ENCODE measurements at regions of chr3 and their contacts with region 1.

Region 1: GRCh38 chr3:166837535-166837934 is 542.6 kb downstream of the ZBBX start:
- DNase-seq: peak; percentile 20
- ATAC-seq: peak; percentile 94
- H3K4me3 Mint-ChIP-seq: no peak overlapping the region
- H3K27ac Mint-ChIP-seq: no peak overlapping the region
- H3K4me1 Mint-ChIP-seq: peaks cover 3% of the 10 kb centered on the region
- H3K27me3 Mint-ChIP-seq: no peaks in the 10 kb centered on the region
- CTCF ChIP-seq: peak; percentile 59

Region 2: DNA sequence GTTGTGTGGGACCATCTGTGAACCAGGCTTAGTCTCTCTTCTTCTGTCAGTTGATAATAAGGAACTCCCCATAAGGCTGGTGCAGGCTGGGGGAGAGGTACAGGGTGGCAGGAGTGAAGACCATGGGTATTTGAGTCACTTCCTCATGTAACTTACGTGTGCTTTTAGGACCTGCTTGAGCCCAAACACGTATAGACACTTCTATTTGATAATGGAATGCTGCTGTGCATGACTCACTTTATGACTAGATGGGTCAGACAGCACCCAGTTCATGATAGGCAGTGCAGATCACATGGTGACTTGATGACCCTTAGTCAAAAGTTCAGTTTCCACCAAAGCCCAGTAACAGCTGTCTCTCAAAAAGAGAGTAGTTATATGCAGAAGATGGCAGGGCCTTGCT is 51.7 kb after region 1 on chr3:
- CTCF ChIA-PET with region 1: no interaction called
- POLR2A ChIA-PET with region 1: no interaction called
- DNase-seq: no peak
- ATAC-seq: no peak
- H3K4me3 Mint-ChIP-seq: no peak overlapping the region
- H3K27ac Mint-ChIP-seq: no peak overlapping the region
- H3K4me1 Mint-ChIP-seq: no peaks in the 10 kb centered on the region
- H3K27me3 Mint-ChIP-seq: no peaks in the 10 kb centered on the region
- CTCF ChIP-seq: no peak

Region 3: GRCh38 chr3:167032261-167032876 is 194.8 kb after region 1 on chr3:
- CTCF ChIA-PET with region 1: interaction called, 10 read pairs
- POLR2A ChIA-PET with region 1: no interaction called
- DNase-seq: no peak
- ATAC-seq: peak; percentile 24; the same call in 1 of the 2 replicates
- H3K4me3 Mint-ChIP-seq: no peak overlapping the region
- H3K27ac Mint-ChIP-seq: no peak overlapping the region
- H3K4me1 Mint-ChIP-seq: 0 out of 2 replicates have a peak, but pooled peaks cover 4% of the 10 kb centered on the region
- H3K27me3 Mint-ChIP-seq: no peaks in the 10 kb centered on the region
- CTCF ChIP-seq: peak; percentile 34; the same call in 1 of the 2 replicates

Region 4: DNA sequence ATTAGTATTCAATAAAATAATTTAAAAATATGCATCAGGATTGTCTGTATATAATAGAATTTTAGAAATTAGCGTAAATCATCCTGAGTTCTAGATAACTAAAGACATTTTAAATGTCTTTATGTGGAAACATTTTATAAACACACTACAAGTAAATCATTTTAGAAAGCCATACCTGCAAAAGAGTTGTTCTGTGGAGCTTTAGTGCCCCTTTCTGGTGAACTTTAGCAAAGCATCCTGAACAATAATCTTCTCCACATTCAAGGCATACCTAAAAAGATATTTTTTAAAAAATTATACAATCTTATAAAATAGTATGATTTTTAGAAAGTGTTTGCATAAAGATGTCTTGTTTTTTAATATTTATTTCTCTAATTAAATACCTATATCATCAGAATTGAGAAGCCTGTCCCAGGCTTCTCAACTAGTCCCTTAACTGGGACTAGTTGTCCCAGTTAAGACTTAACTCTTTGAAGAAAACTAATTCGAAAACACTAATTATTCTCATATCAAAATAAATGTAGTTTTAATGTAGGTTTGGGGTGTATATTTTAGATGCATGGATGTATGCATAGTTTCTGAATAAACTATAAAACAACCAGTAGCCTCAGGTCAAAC is 512.8 kb after region 1 on chr3:
- CTCF ChIA-PET with region 1: no interaction called
- POLR2A ChIA-PET with region 1: no interaction called
- DNase-seq: no peak
- ATAC-seq: no peak
- H3K4me3 Mint-ChIP-seq: no peak overlapping the region
- H3K27ac Mint-ChIP-seq: no peak overlapping the region
- H3K4me1 Mint-ChIP-seq: no peaks in the 10 kb centered on the region
- H3K27me3 Mint-ChIP-seq: no peaks in the 10 kb centered on the region
- CTCF ChIP-seq: peak; percentile 47; the same call in 1 of the 2 replicates